Endothelial cell of umbilical vein (primary cell): ENCODE measurements at regions of chr3 and their contacts with region 1.

Region 1: GRCh38 chr3:189947948-189948723 is 172.6 kb downstream of the P3H2 start:
- DNase-seq: peak; percentile 59
- H3K4me3 ChIP-seq: no peak overlapping the region
- H3K27ac ChIP-seq: no peak overlapping the region
- H3K4me1 ChIP-seq: no peaks in the 10 kb centered on the region
- H3K27me3 ChIP-seq: peaks cover 2 to 4% of the 10 kb centered on the region in 2 experiments
- CTCF ChIP-seq: peak; percentile 37 to 39
- POLR2A ChIP-seq: no peak

Region 2: DNA sequence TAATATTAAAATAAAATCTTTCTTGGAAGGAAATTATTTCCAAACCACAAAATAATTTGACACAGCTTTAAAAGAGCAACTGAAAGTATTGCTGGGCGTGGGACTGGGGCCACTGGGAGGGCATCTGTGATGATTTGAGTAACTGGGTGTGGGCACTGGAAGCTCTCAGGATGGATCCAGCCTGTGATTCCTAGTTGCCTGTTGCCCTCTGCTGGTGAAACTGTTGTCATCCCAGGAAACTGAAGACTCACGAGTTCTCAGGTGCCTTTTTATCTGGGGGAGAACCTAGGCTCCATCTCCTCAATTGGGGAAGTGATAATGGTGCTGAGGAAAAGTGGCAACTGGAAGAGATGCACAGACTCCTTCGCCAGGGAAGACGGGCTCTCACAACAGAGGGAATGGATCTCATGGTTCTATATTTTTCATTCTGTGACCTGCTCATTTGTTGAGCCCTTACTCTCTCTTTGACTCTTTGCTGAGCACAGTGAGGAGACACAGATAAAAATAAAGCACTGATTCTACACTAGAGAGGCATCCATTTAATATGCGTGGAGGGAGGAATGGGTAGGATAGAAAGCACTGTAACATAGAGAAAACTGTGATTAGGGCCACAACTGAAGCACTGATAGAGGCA is 714.8 kb before region 1 on chr3:
- CTCF ChIA-PET with region 1: interaction called, 10 read pairs
- POLR2A ChIA-PET with region 1: no interaction called
- dilution Hi-C with region 1: no loop called
- intact Hi-C with region 1: no loop called
- DNase-seq: peak; percentile 27
- H3K4me3 ChIP-seq: no peak overlapping the region
- H3K27ac ChIP-seq: no peak overlapping the region
- H3K4me1 ChIP-seq: no peaks in the 10 kb centered on the region
- H3K27me3 ChIP-seq: peaks cover 0 to 4% of the 10 kb centered on the region in 2 experiments
- CTCF ChIP-seq: peak; percentile 35 to 65
- POLR2A ChIP-seq: no peak

Region 3: DNA sequence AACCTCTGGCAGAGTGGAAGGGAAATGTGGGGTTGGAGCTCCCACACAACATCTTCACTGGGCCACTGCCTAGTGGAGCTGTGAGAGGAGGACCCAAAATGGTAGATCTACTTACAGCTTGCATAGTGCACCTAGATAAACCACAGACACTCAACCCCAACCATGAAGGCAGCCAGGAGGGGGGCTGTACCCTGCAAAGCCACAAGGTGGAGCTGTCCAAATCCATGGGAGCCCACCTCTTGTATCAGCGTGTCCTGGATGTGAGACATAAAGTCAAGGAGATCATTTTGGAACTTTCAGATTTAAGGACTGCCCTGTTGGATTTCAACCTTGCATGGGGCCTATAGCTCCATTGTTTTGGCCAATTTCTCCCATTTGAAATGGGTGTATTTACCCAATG is 296.1 kb before region 1 on chr3:
- CTCF ChIA-PET with region 1: interaction called, 158 read pairs
- POLR2A ChIA-PET with region 1: no interaction called
- dilution Hi-C with region 1: no loop called
- intact Hi-C with region 1: no loop called
- DNase-seq: peak; percentile 46
- H3K4me3 ChIP-seq: no peak overlapping the region
- H3K27ac ChIP-seq: no peak overlapping the region
- H3K4me1 ChIP-seq: no peaks in the 10 kb centered on the region
- H3K27me3 ChIP-seq: no peaks in the 10 kb centered on the region
- CTCF ChIP-seq: peak; percentile 12 to 67
- POLR2A ChIP-seq: no peak

Region 4: GRCh38 chr3:189710620-189711402 is 237.3 kb before region 1 on chr3:
- CTCF ChIA-PET with region 1: interaction called, 16 read pairs
- POLR2A ChIA-PET with region 1: no interaction called
- dilution Hi-C with region 1: no loop called
- intact Hi-C with region 1: no loop called
- DNase-seq: peak; percentile 95
- H3K4me3 ChIP-seq: no peak overlapping the region
- H3K27ac ChIP-seq: peak overlapping the region; percentile 57
- H3K4me1 ChIP-seq: peaks cover 22% of the 10 kb centered on the region
- H3K27me3 ChIP-seq: no peaks in the 10 kb centered on the region
- CTCF ChIP-seq: no peak
- POLR2A ChIP-seq: no peak

Region 5: GRCh38 chr3:189786479-189787064 is 161.6 kb before region 1 on chr3:
- CTCF ChIA-PET with region 1: interaction called, 25 read pairs
- POLR2A ChIA-PET with region 1: no interaction called
- dilution Hi-C with region 1: no loop called
- intact Hi-C with region 1: loop called (anchors 1 kb)
- DNase-seq: no peak
- H3K4me3 ChIP-seq: no peak overlapping the region
- H3K27ac ChIP-seq: no peak overlapping the region
- H3K4me1 ChIP-seq: peaks cover 18% of the 10 kb centered on the region
- H3K27me3 ChIP-seq: no peaks in the 10 kb centered on the region
- CTCF ChIP-seq: no peak
- POLR2A ChIP-seq: no peak

Region 6: DNA sequence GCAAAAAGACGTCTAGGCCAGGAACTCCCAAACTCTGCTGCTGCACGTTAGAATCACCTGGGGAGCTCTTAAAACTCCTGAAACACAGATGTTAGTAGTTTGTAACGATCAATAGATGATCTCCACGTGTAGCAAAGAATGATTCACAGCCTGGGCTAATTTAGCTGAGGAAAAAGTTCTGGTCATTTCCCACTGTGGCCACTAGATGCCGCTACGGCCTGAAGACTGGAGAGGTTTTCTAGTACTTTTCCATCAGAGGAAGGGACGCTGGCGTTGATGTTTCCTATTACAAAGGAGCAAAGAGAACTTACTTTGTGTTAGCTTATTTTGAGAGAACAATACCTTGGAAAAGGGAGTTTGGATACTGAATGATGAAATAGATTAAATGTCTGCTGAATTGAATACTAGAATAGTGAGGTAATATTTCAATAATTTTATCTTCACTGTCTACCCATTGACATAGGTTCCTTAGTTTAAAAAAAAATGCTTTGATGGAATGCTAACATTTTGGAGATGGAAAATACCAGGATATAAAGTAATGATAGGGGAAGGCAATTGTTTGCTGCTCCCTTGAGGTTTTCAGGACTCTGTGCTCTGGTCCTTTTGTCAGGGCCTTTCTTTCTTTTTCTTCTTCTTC is 13.5 kb after region 1 on chr3:
- CTCF ChIA-PET with region 1: interaction called, 24 read pairs
- POLR2A ChIA-PET with region 1: no interaction called
- dilution Hi-C with region 1: no loop called
- intact Hi-C with region 1: no loop called
- DNase-seq: peak; percentile 89
- H3K4me3 ChIP-seq: no peak overlapping the region
- H3K27ac ChIP-seq: no peak overlapping the region
- H3K4me1 ChIP-seq: no peaks in the 10 kb centered on the region
- H3K27me3 ChIP-seq: no peaks in the 10 kb centered on the region
- CTCF ChIP-seq: peak; percentile 77 to 90
- POLR2A ChIP-seq: no peak

Region 7: GRCh38 chr3:190032924-190033323 is 84.8 kb after region 1 on chr3:
- CTCF ChIA-PET with region 1: no interaction called
- POLR2A ChIA-PET with region 1: no interaction called
- dilution Hi-C with region 1: no loop called
- intact Hi-C with region 1: no loop called
- DNase-seq: no peak
- H3K4me3 ChIP-seq: no peak overlapping the region
- H3K27ac ChIP-seq: no peak overlapping the region
- H3K4me1 ChIP-seq: peaks cover 5% of the 10 kb centered on the region
- H3K27me3 ChIP-seq: no peaks in the 10 kb centered on the region
- CTCF ChIP-seq: no peak
- POLR2A ChIP-seq: no peak